Mammary epithelial cell (primary cell): ENCODE measurements at regions of chr11 and their contacts with region 1.

Region 1: GRCh38 chr11:59097113-59097708 is 9.8 kb upstream of the FAM111B start:
- DNase-seq: peak; percentile 31
- H3K4me3 ChIP-seq: no peak overlapping the region
- H3K27ac ChIP-seq: no peak overlapping the region
- H3K4me1 ChIP-seq: no peaks in the 10 kb centered on the region
- H3K27me3 ChIP-seq: no peaks in the 10 kb centered on the region
- CTCF ChIP-seq: peak; percentile 54 to 76

Region 2: DNA sequence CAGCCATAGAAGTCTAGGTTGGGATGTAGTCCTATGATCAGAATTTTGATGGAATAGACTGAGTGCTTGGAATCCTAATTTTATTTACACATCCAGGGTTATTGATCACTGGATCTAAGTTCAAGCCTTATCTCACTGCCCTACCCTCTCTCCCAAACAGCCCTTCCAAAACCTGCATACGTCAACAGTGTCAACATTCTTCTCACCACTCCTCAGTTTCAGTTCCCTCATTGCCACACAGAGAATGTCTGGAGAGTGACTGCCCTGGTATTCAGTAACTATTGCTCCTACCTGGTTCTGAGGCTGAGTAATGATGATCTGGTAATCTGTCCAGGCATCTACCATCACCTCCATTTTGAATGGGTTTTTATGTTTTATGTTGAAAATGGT is 97.9 kb before region 1 on chr11:
- CTCF ChIA-PET with region 1: no interaction called
- dilution Hi-C with region 1: no loop called
- in situ Hi-C with region 1: loop called in 1 of 2 experiments (anchors 25 kb)
- intact Hi-C with region 1: no loop called
- DNase-seq: no peak
- H3K4me3 ChIP-seq: no peak overlapping the region
- H3K27ac ChIP-seq: no peak overlapping the region
- H3K4me1 ChIP-seq: no peaks in the 10 kb centered on the region
- H3K27me3 ChIP-seq: peaks cover 2% of the 10 kb centered on the region
- CTCF ChIP-seq: no peak

Region 3: GRCh38 chr11:59135648-59136461 is 38.6 kb after region 1 on chr11:
- CTCF ChIA-PET with region 1: no interaction called
- dilution Hi-C with region 1: no loop called
- in situ Hi-C with region 1: no loop called
- intact Hi-C with region 1: loop called (anchors 1 kb)
- DNase-seq: peak; percentile 36
- H3K4me3 ChIP-seq: no peak overlapping the region
- H3K27ac ChIP-seq: no peak overlapping the region
- H3K4me1 ChIP-seq: peaks cover 6% of the 10 kb centered on the region
- H3K27me3 ChIP-seq: no peaks in the 10 kb centered on the region
- CTCF ChIP-seq: peak; percentile 99 to 100

Region 4: DNA sequence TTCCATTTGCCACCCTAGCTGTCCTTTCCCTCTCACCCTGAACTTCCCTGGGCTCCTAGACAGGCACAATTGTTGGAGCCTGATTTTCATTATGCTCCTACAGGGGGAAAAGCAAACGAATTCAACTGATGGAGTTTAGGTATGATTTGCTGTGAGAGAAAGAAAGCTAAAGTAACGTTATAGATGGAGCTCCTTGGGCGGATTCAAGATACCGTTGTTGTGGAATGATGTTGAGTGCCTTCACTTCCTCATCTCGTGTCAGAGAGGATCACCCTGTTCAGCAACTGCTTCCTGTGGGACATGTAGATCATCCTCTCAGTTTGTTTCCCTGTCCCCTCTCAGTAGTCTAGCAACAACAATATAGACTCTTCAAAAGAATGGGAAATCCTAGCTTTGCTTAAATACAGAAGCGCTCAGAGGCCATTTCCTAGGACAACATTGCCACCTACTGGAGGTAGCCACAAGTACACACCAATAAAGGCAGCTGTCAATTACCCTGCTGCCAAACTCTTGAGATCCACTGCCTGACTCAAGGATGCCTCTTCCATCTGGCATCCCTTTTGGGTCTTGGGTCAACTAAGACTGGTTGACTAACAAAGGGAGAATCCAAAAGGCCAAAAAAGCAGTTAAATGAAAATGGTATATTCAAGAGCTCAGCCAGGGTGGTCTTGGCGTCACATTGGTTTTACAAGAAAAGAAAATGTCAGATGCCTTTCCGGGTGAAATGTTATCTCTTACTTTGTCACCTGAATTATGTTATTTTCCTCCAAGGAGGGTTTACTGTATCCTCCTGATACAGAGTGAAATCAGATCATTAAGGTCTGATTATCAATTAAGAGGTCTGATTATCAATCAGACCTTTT is 61.2 kb after region 1 on chr11:
- CTCF ChIA-PET with region 1: no interaction called
- dilution Hi-C with region 1: no loop called
- in situ Hi-C with region 1: no loop called
- intact Hi-C with region 1: loop called (anchors 1 kb)
- DNase-seq: peak; percentile 52
- H3K4me3 ChIP-seq: no peak overlapping the region
- H3K27ac ChIP-seq: no peak overlapping the region
- H3K4me1 ChIP-seq: no peaks in the 10 kb centered on the region
- H3K27me3 ChIP-seq: no peaks in the 10 kb centered on the region
- CTCF ChIP-seq: peak; percentile 83 to 86